Activated CD4-positive, alpha-beta memory T cell treated with anti-CD3 and anti-CD28 coated beads, Interleukin-2, amount 10 ng/mL, durations not matched to agents 7 days and 5 days (primary cell): ENCODE measurements at regions of chr17 and their contacts with region 1.

Region 1: GRCh38 chr17:3738562-3739295 is 15.0 kb downstream of the HASPIN start:
- DNase-seq: peak; percentile 67
- H3K4me3 Mint-ChIP-seq: no peak overlapping the region
- H3K27ac Mint-ChIP-seq: peak overlapping the region; percentile 7
- H3K4me1 Mint-ChIP-seq: peaks cover 42% of the 10 kb centered on the region
- H3K27me3 Mint-ChIP-seq: peaks cover 2% of the 10 kb centered on the region

Region 2: DNA sequence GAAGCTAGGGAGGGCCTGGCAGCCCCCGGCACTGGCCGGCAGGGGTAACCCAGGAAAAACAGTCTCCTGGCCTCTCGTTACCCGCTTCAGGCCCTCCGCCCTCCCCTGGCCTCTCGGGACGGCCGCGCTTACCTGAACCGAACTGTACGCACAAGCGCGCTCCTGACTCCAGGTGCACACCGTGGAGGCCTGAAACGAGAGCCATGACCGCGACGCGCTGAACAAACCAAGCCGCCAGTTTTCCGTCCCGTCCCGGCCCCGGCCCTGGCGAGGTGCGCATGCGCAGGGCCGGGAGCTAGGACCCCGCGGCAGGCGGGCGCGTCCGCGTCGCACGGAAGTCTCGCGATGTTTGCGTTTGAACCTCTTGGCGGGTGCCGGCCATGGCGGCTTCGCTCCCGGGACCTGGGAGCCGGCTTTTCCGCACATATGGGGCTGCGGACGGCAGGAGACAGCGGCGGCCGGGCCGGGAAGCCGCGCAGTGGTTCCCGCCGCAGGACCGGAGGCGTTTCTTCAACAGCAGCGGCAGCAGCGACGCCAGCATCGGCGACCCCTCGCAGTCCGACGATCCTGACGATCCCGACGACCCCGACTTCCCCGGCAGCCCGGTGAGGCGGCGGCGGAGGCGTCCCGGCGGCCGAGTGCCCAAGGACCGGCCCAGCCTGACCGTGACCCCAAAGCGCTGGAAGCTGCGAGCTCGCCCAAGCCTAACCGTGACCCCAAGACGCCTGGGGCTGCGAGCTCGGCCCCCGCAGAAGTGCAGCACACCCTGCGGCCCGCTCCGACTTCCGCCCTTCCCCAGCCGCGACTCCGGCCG is 15.0 kb before region 1 on chr17 and contains the start of gene HASPIN:
- CTCF ChIA-PET with region 1: interaction called, 23 read pairs
- POLR2A ChIA-PET with region 1: interaction called, 20 read pairs
- DNase-seq: peak; percentile 93
- H3K4me3 Mint-ChIP-seq: peak within 1 kb of the TSS; percentile 79
- H3K27ac Mint-ChIP-seq: peak within 1 kb of the TSS; percentile 68
- H3K4me1 Mint-ChIP-seq: peaks cover 65% of the 10 kb centered on the region
- H3K27me3 Mint-ChIP-seq: no peaks in the 10 kb centered on the region
- total RNA-seq, gene HASPIN: 23.8 to 25.2 TPM

Region 3: DNA sequence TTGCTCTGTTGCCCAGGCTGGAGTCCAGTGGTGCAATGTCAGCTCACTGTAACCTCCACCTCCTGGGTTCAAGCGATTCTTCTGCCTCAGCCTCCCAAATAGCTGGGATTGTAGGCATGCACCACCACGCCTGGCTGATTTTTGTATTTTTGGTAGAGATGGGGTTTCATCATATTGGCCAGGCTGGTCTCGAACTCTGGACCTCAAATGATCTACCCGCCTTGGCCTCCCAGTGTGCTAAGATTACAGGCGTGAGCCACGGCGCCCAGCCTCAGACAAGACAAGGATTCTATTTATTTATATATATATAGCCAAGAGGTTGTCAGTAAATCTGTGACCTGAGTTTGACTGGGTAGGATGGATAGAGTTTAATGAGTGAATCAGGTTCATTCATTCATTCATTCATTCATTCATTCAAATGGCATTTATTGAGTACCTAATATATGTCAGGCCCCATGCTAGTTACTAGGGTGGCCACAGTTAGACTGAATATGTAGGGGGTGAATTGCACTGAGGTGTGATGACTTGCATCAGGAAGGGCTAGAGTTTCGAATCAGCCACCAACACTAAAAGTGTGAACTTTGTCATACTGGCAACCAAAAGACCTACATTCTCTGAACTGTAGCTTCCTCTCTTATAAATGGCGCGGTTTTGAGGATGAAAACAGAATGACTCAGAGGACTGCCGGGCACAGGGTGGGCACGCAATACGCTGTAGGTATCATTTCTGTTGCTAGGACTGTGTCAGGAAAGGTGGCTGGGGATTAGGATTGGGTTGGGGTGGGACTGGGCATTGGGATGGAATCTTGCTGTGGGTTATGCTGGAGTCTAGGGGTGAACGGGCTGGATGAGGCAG is 24.4 kb after region 1 on chr17:
- CTCF ChIA-PET with region 1: interaction called, 21 read pairs
- POLR2A ChIA-PET with region 1: interaction called, 14 read pairs
- DNase-seq: peak; percentile 68
- H3K4me3 Mint-ChIP-seq: peak overlapping the region; percentile 75
- H3K27ac Mint-ChIP-seq: peak overlapping the region; percentile 97
- H3K4me1 Mint-ChIP-seq: peaks cover 64% of the 10 kb centered on the region
- H3K27me3 Mint-ChIP-seq: no peaks in the 10 kb centered on the region

Region 4: DNA sequence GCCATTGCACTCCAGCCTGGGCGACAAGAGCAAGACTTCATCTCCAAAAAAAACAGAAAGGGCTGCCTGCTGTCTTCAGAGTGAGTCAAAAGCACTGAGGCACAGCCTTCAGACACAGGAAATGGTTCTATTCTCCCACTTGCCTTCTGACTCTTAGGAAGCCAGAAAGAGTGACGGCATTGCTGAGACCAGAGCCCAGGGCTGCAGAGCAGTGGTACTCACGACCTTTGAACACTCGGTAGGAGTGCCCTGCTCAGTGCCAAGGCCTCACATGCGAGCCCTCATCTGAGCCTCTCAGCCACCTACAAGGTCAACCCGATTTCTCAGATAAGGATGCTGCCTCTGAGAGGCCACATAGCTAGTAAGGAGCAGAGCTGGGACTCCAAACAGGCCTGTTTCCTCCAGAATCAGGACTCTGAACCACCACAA is 65.8 kb after region 1 on chr17:
- CTCF ChIA-PET with region 1: interaction called, 14 read pairs
- POLR2A ChIA-PET with region 1: interaction called, 3 read pairs
- DNase-seq: peak; percentile 43
- H3K4me3 Mint-ChIP-seq: no peak overlapping the region
- H3K27ac Mint-ChIP-seq: peak overlapping the region; percentile 31
- H3K4me1 Mint-ChIP-seq: peaks cover 27% of the 10 kb centered on the region
- H3K27me3 Mint-ChIP-seq: no peaks in the 10 kb centered on the region

Region 5: GRCh38 chr17:3818786-3819185 is 80.1 kb after region 1 on chr17:
- CTCF ChIA-PET with region 1: interaction called, 25 read pairs
- POLR2A ChIA-PET with region 1: interaction called, 6 read pairs
- DNase-seq: no peak
- H3K4me3 Mint-ChIP-seq: no peak overlapping the region
- H3K27ac Mint-ChIP-seq: no peak overlapping the region
- H3K4me1 Mint-ChIP-seq: peaks cover 2% of the 10 kb centered on the region
- H3K27me3 Mint-ChIP-seq: no peaks in the 10 kb centered on the region

Region 6: GRCh38 chr17:3845621-3846441 is 107.1 kb after region 1 on chr17 and contains the start of gene NCBP3:
- CTCF ChIA-PET with region 1: interaction called, 139 read pairs
- POLR2A ChIA-PET with region 1: interaction called, 12 read pairs
- DNase-seq: peak; percentile 92
- H3K4me3 Mint-ChIP-seq: peak within 1 kb of the TSS; percentile 95
- H3K27ac Mint-ChIP-seq: peak within 1 kb of the TSS; percentile 88
- H3K4me1 Mint-ChIP-seq: peaks cover 25% of the 10 kb centered on the region
- H3K27me3 Mint-ChIP-seq: peaks cover 9% of the 10 kb centered on the region
- total RNA-seq, gene NCBP3: 42.8 to 43.9 TPM